Panc1 (cell line): ENCODE measurements at regions of chr17 and their contacts with region 1.

Region 1: GRCh38 chr17:31147507-31148202 is 52.9 kb downstream of the NF1 start:
- DNase-seq: no peak
- ATAC-seq: no peak
- H3K4me3 ChIP-seq: no peak overlapping the region
- H3K27ac ChIP-seq: no peak overlapping the region
- H3K4me1 ChIP-seq: no peaks in the 10 kb centered on the region
- H3K27me3 ChIP-seq: no peaks in the 10 kb centered on the region
- CTCF ChIP-seq: no peak

Region 2: GRCh38 chr17:30848021-30848420 is 299.6 kb before region 1 on chr17:
- CTCF ChIA-PET with region 1: no interaction called
- POLR2A ChIA-PET with region 1: interaction called, 10 read pairs
- in situ Hi-C with region 1: no loop called
- intact Hi-C with region 1: no loop called
- DNase-seq: no peak
- ATAC-seq: no peak
- H3K4me3 ChIP-seq: no peak overlapping the region
- H3K27ac ChIP-seq: no peak overlapping the region
- H3K4me1 ChIP-seq: no peaks in the 10 kb centered on the region
- H3K27me3 ChIP-seq: no peaks in the 10 kb centered on the region
- CTCF ChIP-seq: no peak

Region 3: DNA sequence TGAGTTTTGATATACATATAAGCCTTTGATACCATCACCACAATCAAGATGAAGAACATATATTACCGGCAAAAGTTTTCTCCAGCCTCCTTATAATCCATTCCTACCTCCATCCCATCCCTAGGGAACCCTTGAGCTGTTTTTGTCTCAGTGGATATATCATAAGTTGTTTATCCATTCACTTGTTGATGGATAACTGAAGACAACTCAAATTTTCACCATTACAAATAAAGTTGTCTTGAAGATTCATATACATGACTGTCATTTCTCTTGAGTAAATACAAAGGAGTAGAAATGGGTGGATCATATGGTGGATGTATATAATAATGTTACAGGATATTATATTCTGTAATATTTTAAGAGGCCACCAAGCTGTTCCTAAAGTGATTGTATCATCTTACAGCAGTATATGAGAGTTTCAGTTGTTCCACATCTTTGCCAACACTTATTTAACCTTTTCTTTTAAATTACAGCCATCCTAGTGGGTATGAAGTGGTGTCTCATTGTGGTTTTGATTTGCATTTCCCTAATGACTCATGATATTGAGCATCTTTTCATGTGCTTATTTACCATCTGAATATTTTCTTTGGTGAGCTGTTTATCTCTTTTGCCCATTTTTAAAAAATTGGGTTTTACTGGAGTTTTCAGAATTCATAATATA is 35.5 kb before region 1 on chr17:
- CTCF ChIA-PET with region 1: no interaction called
- POLR2A ChIA-PET with region 1: interaction called, 19 read pairs
- in situ Hi-C with region 1: no loop called
- intact Hi-C with region 1: no loop called
- DNase-seq: no peak
- ATAC-seq: no peak
- H3K4me3 ChIP-seq: no peak overlapping the region
- H3K27ac ChIP-seq: no peak overlapping the region
- H3K4me1 ChIP-seq: peaks cover 7% of the 10 kb centered on the region; the same call in 1 of the 2 replicates
- H3K27me3 ChIP-seq: no peaks in the 10 kb centered on the region
- CTCF ChIP-seq: no peak

Region 4: GRCh38 chr17:31167111-31167510 is 19.5 kb after region 1 on chr17:
- CTCF ChIA-PET with region 1: no interaction called
- POLR2A ChIA-PET with region 1: no interaction called
- in situ Hi-C with region 1: no loop called
- intact Hi-C with region 1: no loop called
- DNase-seq: no peak
- ATAC-seq: no peak
- H3K4me3 ChIP-seq: no peak overlapping the region
- H3K27ac ChIP-seq: no peak overlapping the region
- H3K4me1 ChIP-seq: no peaks in the 10 kb centered on the region
- H3K27me3 ChIP-seq: no peaks in the 10 kb centered on the region
- CTCF ChIP-seq: no peak

Region 5: GRCh38 chr17:31609996-31610910 is 462.6 kb after region 1 on chr17:
- CTCF ChIA-PET with region 1: no interaction called
- POLR2A ChIA-PET with region 1: no interaction called
- in situ Hi-C with region 1: no loop called
- intact Hi-C with region 1: loop called (anchors 10 kb)
- DNase-seq: no peak
- ATAC-seq: no peak; the same call in 1 of the 2 replicates
- H3K4me3 ChIP-seq: no peak overlapping the region
- H3K27ac ChIP-seq: no peak overlapping the region
- H3K4me1 ChIP-seq: no peaks in the 10 kb centered on the region
- H3K27me3 ChIP-seq: no peaks in the 10 kb centered on the region
- CTCF ChIP-seq: no peak